HEK293 (cell line): ENCODE measurements at regions of chr14 and their contacts with region 1.

Region 1: DNA sequence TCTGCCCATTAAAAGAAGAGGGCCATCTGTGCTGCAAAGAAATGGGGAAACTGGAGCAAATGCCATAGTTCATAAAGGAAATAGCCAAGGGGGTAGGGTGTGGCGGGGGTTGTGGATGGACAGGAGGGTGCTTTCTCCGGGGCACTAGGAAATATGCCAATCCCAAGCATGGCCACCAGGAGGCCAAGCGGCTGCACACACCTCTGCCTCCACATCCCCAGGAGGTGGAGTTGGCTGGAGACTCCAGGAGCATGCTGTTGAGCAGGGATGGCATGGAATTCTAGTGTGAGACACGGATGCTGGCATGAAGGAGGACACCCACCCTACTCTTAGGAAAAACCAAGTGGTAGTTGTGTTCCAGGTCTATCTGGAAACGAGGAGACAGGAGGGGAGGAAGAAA is 25.2 kb downstream of the NID2 start:
- H3K4me3 ChIP-seq: no peak overlapping the region
- H3K27ac ChIP-seq: no peak overlapping the region
- H3K4me1 ChIP-seq: no peaks in the 10 kb centered on the region
- CTCF ChIP-seq: peak; percentile 47

Region 2: DNA sequence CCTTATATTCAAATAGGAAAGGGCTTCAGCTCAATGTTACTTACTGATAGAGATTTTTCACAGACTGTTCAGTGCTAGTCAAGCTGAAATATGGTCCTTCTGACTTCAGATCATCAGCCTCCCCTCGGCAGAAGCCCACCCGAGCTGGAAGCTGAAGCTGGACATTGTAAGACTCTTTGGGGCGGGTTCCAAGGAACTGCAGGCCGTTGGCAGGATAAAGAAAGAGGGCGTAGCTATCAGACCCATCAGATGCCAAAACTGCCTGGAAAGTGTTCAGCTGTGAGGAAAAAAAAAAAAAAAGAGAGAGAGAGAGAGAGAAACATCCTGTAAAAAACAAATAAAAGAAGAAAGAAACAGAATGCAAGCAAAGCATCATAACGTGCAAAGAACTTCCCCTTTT is 16.4 kb after region 1 on chr14:
- CTCF ChIA-PET with region 1: interaction called, 10 read pairs
- POLR2A ChIA-PET with region 1: no interaction called
- H3K4me3 ChIP-seq: no peak overlapping the region
- H3K27ac ChIP-seq: no peak overlapping the region
- H3K4me1 ChIP-seq: no peaks in the 10 kb centered on the region
- CTCF ChIP-seq: no peak

Region 3: DNA sequence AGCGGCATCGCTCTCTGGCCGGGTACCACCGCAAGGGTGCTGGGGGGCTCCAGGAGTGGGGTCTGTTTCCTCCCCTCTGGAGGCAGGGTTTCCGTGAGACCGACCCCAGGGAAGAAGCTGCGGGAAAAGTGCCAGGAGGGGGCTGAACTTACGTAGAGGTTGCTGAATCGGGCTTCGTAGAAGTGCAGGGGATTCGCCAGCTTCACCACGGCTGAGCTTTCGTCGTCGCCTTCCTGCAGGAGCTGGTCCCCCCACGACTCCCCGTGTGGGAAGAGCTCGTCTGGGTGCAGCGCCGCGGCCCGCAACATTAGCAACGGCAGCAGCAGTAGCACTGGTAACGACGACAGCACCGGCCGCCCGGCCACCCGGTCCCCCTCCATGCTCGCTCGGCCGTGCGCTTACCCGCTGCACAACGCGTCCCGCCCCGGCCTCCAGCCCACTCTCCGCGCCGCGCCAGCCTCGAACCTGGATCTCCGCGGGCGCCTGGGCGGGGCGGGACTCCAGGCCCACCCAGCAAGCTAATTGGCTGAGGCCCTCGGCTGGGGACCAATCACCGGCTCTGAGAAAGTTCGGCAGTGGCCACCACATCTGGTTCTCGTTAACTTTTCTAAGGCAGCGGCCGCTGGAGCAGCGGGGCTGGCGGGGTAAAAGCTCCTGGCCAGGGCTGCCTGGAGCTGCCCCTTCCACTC is 25.1 kb after region 1 on chr14 and contains the start of gene NID2:
- CTCF ChIA-PET with region 1: interaction called, 14 read pairs
- POLR2A ChIA-PET with region 1: interaction called, 7 read pairs
- H3K4me3 ChIP-seq: peak within 1 kb of the TSS; percentile 74
- H3K27ac ChIP-seq: peak within 1 kb of the TSS; percentile 53; the same call in 1 of the 2 replicates
- H3K4me1 ChIP-seq: peaks cover 5% of the 10 kb centered on the region; the same call in 1 of the 2 replicates
- CTCF ChIP-seq: peak; percentile 47

Region 4: GRCh38 chr14:52131640-52132320 is 88.1 kb after region 1 on chr14:
- CTCF ChIA-PET with region 1: interaction called, 25 read pairs
- POLR2A ChIA-PET with region 1: no interaction called
- H3K4me3 ChIP-seq: no peak overlapping the region
- H3K27ac ChIP-seq: no peak overlapping the region
- H3K4me1 ChIP-seq: no peaks in the 10 kb centered on the region
- CTCF ChIP-seq: peak; percentile 59; the same call in 1 of the 2 replicates